IMR-90 (cell line): ENCODE measurements at regions of chr2 and their contacts with region 1.

Region 1: DNA sequence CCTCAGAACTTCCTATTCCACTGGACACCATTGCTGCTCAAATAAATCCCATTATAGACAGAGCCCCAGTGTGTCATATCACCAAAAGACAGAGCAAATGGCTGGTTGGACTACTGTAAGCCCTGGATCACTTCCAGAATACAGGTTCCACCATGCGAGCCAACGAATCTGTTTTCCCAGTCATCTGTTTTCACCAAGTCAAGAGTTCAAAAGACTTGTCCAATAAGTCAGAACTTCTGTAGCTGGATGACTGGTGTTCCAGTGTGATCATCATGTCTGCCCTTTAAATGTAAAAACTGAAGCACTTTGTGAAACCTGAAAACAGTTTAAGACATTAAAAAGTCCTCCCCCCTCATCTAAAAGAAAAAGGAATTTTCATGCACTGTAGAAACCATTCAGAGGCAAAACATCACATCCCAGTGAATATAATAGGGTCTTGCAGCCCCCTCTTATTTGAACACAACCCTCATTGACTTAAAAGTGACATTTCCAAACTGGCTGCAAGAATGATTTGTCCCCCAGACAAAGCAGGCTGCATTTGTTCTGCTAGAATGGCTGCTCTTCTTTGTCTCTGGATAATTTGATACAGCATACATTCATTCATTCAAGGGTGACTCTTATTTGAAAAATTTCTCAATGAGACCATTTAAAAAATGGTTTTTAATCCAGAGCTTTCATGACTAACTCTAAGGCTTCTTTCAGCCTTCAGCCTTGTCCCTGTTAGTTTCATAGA is 64.6 kb upstream of the TANC1 start:
- DNase-seq: no peak
- ATAC-seq: no peak
- H3K4me3 ChIP-seq: no peak overlapping the region
- H3K27ac ChIP-seq: no peak overlapping the region
- H3K4me1 ChIP-seq: peaks cover 2% of the 10 kb centered on the region
- H3K27me3 ChIP-seq: no peaks in the 10 kb centered on the region
- CTCF ChIP-seq: no peak
- POLR2A ChIP-seq: no peak
- RAD21 ChIP-seq: no peak

Region 2: DNA sequence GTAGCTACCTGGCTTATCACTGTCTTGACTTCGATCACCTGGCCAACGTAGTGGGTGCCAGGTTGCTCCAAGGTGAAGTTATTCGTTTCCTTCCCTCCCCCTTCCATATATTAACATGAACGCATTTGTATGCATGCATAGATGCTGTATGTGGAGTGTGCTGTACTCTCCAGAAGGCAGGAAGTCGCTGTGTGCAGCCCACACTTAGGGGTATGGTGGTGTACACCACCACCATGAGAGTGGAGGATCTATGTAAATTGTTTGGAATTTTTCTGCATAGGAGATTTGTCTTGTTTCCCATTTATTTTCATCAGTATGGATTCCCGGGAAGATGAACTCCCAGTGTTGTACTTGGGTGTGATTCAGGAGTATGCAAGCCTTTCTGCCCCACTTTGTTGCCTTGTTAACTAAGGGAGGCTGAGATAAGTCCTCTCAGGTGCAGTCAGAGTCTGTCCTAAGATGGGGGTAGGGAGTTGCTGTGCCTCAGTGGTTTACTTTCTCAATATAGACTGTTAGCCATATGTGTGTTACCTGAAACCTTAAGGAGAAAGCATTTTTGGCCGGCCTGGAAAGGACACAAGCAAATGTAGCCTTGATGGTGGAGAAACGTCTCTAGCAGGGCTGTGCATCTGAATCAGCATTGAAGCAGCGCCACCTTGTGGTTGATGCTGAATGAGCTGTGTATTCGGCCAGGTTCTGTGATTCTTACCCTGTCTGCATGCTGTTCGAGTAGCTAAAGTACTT is 214.4 kb after region 1 on chr2:
- CTCF ChIA-PET with region 1: interaction called, 14 read pairs
- POLR2A ChIA-PET with region 1: no interaction called
- dilution Hi-C with region 1: loop called (anchors 25 kb)
- in situ Hi-C with region 1: loop called (anchors 5 kb)
- intact Hi-C with region 1: loop called (anchors 1 kb)
- DNase-seq: peak; percentile 88
- ATAC-seq: peak; percentile 97
- H3K4me3 ChIP-seq: no peak overlapping the region
- H3K27ac ChIP-seq: no peak overlapping the region
- H3K4me1 ChIP-seq: peaks cover 12% of the 10 kb centered on the region
- H3K27me3 ChIP-seq: no peaks in the 10 kb centered on the region
- CTCF ChIP-seq: peak; percentile 92
- POLR2A ChIP-seq: peak; percentile 51; the same call in 1 of the 2 replicates
- RAD21 ChIP-seq: peak; percentile 99

Region 3: GRCh38 chr2:159168707-159169106 is 264.8 kb after region 1 on chr2:
- CTCF ChIA-PET with region 1: no interaction called
- POLR2A ChIA-PET with region 1: no interaction called
- dilution Hi-C with region 1: no loop called
- in situ Hi-C with region 1: no loop called
- intact Hi-C with region 1: loop called (anchors 5 kb)
- DNase-seq: peak; percentile 29
- ATAC-seq: peak; percentile 69; the same call in 1 of the 2 replicates
- H3K4me3 ChIP-seq: no peak overlapping the region
- H3K27ac ChIP-seq: no peak overlapping the region
- H3K4me1 ChIP-seq: peaks cover 2% of the 10 kb centered on the region
- H3K27me3 ChIP-seq: no peaks in the 10 kb centered on the region
- CTCF ChIP-seq: peak; percentile 31
- POLR2A ChIP-seq: no peak
- RAD21 ChIP-seq: peak; percentile 43

Region 4: DNA sequence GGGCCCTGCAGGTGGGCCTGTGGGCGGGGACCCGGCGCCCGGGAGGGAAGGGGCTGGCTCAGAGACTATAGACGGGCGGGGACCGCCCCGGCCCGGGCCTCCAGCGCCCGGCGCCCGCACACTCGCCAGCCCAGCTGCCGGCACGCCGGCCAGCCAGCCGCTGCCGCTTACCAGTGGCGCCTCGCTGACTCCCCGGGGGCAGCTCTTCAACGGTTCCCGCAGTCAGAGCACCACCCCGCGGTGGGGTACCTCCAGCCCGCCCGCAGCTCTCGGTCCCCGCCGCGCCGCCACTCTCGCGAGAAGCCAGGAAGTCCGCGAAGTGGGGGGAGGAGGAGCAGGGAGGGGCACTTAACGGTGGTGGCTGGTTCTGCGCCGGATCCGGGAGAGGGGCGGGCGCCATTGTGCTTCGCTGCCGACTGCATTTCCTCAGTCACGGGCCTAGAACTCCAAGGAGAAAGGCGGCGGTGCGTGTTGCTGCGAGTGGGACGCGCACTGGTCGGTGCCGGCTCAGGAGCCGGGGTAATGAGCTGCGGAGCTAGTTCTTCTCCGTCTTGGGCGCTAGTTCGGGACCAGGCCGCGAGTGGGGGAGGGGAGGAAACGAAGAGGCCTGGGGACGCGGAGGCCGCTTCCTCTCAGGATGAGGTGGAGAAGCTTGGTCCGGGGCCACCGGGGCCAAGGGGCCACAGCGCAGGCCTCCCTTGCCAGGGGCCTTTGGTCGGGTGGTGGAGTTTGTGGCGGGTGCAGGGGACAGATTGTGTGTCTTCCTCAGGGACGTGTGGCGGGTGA is 808.5 kb after region 1 on chr2 and contains the start of gene MARCHF7:
- CTCF ChIA-PET with region 1: no interaction called
- POLR2A ChIA-PET with region 1: no interaction called
- dilution Hi-C with region 1: no loop called
- in situ Hi-C with region 1: no loop called
- intact Hi-C with region 1: loop called (anchors 2 kb)
- DNase-seq: peak; percentile 95
- ATAC-seq: peak; percentile 94
- H3K4me3 ChIP-seq: peak within 1 kb of the TSS; percentile 95
- H3K27ac ChIP-seq: peak within 1 kb of the TSS; percentile 97
- H3K4me1 ChIP-seq: peaks cover 8% of the 10 kb centered on the region
- H3K27me3 ChIP-seq: no peaks in the 10 kb centered on the region
- CTCF ChIP-seq: peak; percentile 87
- POLR2A ChIP-seq: peak; percentile 97
- RAD21 ChIP-seq: peak; percentile 81
- total RNA-seq, gene MARCHF7: 193 and 212 TPM in 2 replicates